PC-9 (cell line): ENCODE measurements at regions of chr6 and their contacts with region 1.

Region 1: GRCh38 chr6:137866914-137867684 is at the start of gene TNFAIP3:
- DNase-seq: peak; percentile 85 to 91
- H3K4me3 ChIP-seq: peak within 1 kb of the TSS; percentile 76
- H3K27ac ChIP-seq: peak within 1 kb of the TSS; percentile 80
- H3K4me1 ChIP-seq: peaks cover 59% of the 10 kb centered on the region
- H3K27me3 ChIP-seq: no peaks in the 10 kb centered on the region
- CTCF ChIP-seq: peak; percentile 69
- total RNA-seq, gene TNFAIP3: 7.2 and 7.8 TPM in 2 replicates

Region 2: DNA sequence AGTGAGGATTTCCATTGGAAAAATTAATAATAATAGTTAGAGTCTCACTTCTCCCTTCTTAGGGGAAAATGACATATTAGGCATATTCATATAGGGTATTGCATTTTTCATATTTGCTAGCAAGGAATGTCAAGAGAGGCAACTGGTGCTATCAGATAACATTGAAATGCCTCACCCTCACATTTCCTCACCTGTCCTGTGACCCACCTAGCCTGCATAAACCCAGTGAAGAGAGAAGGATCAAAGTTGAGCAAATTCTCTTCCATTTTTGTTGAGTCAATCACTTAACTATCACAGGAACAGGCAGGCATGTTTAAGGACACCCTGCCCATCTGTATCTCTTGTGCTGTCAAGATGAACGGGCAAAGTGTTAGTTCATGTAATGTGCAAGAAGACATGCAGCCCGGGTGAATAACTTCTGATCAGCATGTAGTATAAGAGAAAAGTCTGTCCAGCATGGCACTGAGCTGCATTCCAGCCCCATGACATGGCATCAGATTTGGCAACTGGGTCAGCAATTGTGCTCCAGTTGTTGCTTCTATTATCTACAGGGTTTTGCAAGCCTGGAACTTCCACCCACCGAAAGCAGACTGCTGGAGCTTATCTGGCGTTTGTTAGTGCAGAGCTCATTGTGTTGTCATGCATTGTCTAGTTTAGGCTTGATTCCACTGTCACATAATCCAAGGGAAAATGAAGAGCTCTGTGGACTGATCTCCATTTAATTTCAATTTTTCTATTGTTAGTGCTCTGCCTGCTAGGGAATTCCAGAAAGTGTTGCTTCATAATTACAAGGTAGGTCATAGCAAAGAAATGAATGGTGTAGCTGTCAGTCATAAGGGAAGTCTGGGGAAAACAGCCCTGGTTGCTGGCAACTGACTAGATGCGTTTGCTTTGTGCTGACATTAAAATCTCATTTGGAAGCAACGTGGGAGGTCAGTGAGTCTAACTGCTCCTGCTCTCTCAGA is 138.4 kb before region 1 on chr6:
- CTCF ChIA-PET with region 1: no interaction called
- POLR2A ChIA-PET with region 1: interaction called, 3 read pairs
- intact Hi-C with region 1: loop called (anchors 5 kb)
- DNase-seq: peak; percentile 74 to 93
- H3K4me3 ChIP-seq: peak overlapping the region; percentile 4; the same call in 1 of the 2 replicates
- H3K27ac ChIP-seq: peak overlapping the region; percentile 63
- H3K4me1 ChIP-seq: peaks cover 72% of the 10 kb centered on the region
- H3K27me3 ChIP-seq: no peaks in the 10 kb centered on the region
- CTCF ChIP-seq: no peak

Region 3: DNA sequence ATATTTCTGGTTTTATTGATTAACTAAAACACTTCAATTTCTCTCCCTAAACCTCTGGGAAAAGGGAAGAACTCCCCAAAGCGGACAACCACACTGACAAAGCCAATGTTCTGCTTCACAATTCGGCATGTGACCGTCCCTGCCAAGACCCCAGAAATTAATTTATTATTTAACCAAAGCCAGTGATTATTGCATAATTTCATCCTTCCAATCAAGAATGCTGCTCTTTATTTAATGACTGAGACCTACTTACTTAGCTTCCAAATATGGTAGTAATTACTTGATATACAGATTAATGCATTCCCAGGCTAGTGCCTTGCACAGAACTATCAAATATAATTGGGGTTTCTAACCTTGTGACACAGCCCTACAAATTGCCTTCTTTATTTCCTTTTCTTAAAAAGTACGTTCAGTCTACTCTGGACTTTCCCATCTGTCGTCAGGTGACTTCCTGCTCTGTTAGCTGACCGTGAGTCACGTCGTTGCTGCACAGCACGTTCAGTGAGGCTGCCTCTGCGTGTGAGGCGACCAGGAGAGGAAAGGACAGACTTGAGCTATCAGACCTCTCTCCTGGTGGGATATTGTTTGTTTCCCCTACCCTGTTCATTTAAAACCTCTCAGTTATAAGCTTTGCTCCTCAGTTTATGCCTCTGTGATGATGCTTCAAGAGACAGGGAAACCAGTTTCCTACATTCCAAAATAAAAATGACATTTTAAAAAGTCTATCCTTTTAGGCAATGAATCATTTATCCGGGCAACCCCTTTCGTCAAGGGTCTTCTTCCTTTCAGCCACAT is 55.8 kb before region 1 on chr6:
- CTCF ChIA-PET with region 1: interaction called, 4 read pairs
- POLR2A ChIA-PET with region 1: no interaction called
- intact Hi-C with region 1: loop called (anchors 2 kb)
- DNase-seq: peak; percentile 56 to 93
- H3K4me3 ChIP-seq: peak overlapping the region; percentile 15; the same call in 1 of the 2 replicates
- H3K27ac ChIP-seq: peak overlapping the region; percentile 69
- H3K4me1 ChIP-seq: peaks cover 49% of the 10 kb centered on the region
- H3K27me3 ChIP-seq: no peaks in the 10 kb centered on the region
- CTCF ChIP-seq: no peak

Region 4: GRCh38 chr6:137926207-137926731 is 59.2 kb after region 1 on chr6:
- CTCF ChIA-PET with region 1: interaction called, 10 read pairs
- POLR2A ChIA-PET with region 1: interaction called, 5 read pairs
- intact Hi-C with region 1: no loop called
- DNase-seq: peak; percentile 20 to 98
- H3K4me3 ChIP-seq: no peak overlapping the region
- H3K27ac ChIP-seq: peak overlapping the region; percentile 61
- H3K4me1 ChIP-seq: peaks cover 45% of the 10 kb centered on the region
- H3K27me3 ChIP-seq: no peaks in the 10 kb centered on the region
- CTCF ChIP-seq: no peak

Region 5: DNA sequence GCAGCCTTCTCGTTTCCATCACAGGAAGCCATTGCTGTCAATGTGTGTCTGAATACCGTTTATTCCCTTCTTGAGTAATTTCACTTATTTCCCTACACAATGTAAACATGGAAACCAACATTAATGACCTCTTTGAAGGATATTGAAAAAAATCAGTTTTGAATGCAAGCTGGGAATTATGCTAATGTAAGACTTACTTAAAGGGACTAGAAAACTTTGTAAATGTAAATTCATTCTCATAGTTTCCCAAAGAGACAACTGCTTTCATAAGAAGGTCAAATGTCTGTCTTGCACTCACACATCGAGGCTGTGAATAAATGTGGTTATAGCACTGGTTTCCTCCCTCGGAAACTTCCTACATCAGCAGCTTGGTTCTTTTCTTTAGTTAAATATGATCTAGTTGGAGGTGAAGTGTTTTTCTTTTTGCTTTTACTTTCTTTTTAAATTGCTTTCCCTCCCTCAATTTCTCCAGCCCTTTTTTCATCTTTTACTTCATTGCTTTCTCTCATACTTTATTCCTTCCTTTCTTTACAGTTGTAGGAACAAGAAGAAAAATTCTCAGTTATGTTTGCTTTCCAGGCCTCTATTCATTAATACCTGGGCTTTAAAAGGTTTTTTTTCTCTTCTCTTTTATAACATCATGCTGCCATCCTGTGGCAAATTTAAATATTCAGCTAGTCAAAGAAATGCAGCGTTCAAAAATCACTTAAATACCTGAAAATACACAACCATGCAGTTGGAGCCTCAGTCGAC is 108.3 kb after region 1 on chr6:
- CTCF ChIA-PET with region 1: interaction called, 3 read pairs
- POLR2A ChIA-PET with region 1: no interaction called
- intact Hi-C with region 1: loop called (anchors 2 kb)
- DNase-seq: no peak
- H3K4me3 ChIP-seq: no peak overlapping the region
- H3K27ac ChIP-seq: no peak overlapping the region
- H3K4me1 ChIP-seq: peaks cover 36% of the 10 kb centered on the region
- H3K27me3 ChIP-seq: no peaks in the 10 kb centered on the region
- CTCF ChIP-seq: peak; percentile 77

Region 6: DNA sequence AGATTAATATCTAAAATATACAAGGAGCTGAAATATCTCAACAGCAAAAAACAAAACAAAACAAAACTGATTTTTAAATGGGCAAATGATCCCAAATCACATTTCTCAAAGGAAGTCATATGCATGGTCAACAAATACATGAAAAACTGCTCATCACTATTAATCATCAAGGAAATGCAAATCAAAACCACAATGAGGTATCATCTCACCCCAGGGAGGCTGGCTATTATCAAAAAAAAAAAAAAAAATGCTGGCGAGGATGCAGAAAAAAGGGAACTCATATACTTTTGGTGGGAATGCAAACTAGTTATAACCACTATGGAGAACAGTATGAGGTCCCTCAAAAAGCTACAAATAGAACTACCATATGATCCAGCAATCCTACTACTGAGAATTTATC is 1086.4 kb after region 1 on chr6:
- CTCF ChIA-PET with region 1: no interaction called
- POLR2A ChIA-PET with region 1: no interaction called
- intact Hi-C with region 1: no loop called
- DNase-seq: no peak
- H3K4me3 ChIP-seq: no peak overlapping the region
- H3K27ac ChIP-seq: no peak overlapping the region
- H3K4me1 ChIP-seq: peaks cover 7% of the 10 kb centered on the region; the same call in 1 of the 2 replicates
- H3K27me3 ChIP-seq: no peaks in the 10 kb centered on the region
- CTCF ChIP-seq: no peak